Natural killer cell (primary cell): ENCODE measurements at regions of chr17 and their contacts with region 1.

Region 1: DNA sequence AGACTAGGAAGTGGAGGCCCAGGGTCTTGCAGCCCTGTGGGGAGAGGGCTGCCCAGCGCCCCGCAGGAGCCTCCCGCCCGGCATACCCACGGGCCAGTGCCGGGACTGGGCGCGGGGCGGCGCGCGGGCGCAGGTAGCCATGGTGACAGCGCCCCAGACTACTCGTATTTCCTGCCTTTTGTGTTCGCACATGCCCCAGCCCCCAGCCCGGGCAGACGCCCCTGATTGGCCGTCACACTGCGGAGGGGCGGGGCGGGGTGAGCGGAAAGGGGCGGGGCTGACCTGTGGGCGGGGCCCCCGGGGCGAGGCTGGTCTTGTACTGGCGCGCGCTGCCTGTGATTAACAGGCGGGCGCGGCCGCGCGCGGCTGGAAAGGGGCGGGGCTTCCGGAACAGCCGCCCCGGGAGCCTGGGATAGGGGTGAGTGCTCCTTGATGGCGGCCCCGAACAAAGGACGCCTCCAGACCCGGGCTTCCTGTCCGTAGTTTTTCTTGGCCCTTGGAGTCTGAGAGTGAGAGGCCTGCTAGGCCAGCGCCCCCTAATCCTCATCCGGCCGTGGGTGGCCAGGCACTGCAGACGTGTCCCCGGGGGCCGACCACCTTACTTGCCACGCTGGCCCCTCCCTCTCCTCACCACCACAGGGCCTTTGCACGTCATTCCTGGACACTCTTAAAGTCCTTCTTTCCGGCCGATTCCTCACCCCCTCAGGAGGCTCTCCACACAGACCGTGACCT is 71.0 kb downstream of the RAI1 start:
- DNase-seq: peak; percentile 96 to 97
- ATAC-seq: peak; percentile 87 to 97 (median 89)
- H3K4me3 ChIP-seq: peak overlapping the region; percentile 57
- H3K4me3 Mint-ChIP-seq: peak overlapping the region; percentile 91
- H3K27ac ChIP-seq: peak overlapping the region; percentile 93
- H3K27ac Mint-ChIP-seq: peak overlapping the region; percentile 95 to 99
- H3K4me1 ChIP-seq: peaks cover 78% of the 10 kb centered on the region
- H3K4me1 Mint-ChIP-seq: peaks cover 59 to 61% of the 10 kb centered on the region in 2 donors
- H3K27me3 ChIP-seq: no peaks in the 10 kb centered on the region
- H3K27me3 Mint-ChIP-seq: no peaks in the 10 kb centered on the region
- CTCF ChIP-seq: peak; percentile 40

Region 2: DNA sequence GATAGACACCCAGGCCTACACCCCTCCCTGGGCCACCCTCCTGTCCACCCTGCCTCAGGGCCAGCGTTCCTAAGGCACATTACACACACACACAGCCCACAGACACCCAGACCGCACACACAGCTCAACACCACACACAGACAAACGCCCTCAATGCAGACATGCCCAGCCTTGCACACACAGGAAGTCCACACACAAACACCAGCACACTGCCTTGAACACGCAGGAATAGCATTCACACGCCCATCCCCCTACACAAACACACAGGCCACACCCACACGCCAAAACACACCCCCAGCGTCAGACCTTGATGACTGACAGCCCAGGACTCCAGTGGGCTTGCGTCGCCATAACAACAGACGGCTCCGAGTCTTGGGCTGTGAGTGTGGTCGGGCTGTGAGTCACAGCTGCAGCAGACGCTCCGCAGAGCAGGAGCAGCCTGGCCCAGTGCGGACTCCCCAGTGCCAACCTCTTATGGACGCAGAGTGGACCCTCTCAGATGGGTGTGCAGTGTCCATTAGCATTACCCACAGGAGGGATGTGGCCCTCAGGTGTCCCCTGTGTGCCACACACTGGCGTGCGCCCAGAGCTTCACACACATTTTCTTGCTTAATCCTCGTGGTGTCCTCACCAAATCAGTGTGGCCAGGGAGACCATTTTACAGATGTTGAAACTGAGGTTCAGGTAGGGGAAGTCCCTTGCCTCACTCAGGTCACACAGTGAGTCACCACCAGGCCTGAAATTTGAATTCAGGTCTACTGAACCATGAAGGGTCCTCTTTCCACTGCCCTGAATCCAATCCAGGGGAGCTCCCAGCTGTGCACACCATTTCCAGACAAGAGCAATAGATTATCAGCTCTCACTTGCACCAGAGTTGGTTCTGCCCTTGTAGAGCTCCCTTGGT is 88.8 kb before region 1 on chr17:
- intact Hi-C with region 1: loop called (anchors 1 kb)
- DNase-seq: peak; percentile 89 to 91
- ATAC-seq: peak; percentile 86 to 95 (median 89)
- H3K4me3 ChIP-seq: no peak overlapping the region
- H3K4me3 Mint-ChIP-seq: peak overlapping the region; percentile 3
- H3K27ac ChIP-seq: peak overlapping the region; percentile 65
- H3K27ac Mint-ChIP-seq: peak overlapping the region; percentile 82 to 83
- H3K4me1 ChIP-seq: peaks cover 22% of the 10 kb centered on the region
- H3K4me1 Mint-ChIP-seq: peaks cover 16 to 18% of the 10 kb centered on the region in 2 donors
- H3K27me3 ChIP-seq: no peaks in the 10 kb centered on the region
- H3K27me3 Mint-ChIP-seq: no peaks in the 10 kb centered on the region
- CTCF ChIP-seq: no peak

Region 3: DNA sequence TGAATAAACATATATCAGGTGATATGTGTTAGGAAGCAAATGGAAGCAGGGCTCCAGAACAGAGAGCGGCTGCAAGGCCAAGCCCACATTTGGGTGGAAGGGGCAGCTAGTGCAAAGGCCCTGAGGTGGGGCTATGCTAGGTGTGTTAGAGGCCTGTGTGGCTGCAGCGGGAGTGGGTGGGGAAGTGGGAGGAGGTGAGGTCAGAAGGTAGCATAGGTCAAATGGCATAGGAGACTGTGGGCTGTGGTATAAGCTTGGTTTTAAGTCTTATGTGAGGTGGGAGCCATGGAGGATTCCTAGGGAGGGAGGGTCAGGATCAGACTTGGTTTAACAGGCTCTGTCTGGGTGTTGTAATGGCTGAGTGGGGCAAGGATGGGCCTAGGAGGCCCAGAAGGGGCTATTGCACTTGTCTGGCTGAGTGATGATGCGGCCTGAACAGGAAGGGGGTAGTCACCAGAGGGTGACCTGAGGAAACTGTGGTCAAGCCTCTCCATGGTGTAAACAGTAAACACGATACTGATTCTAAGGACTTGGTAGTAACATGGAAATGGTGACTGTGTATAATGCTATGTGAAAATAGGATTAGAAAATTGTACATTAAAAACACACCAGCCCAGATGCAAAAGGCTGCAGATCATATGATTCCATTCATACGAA is 39.9 kb before region 1 on chr17:
- intact Hi-C with region 1: loop called (anchors 5 kb)
- DNase-seq: peak; percentile 14 to 33
- ATAC-seq: peak; percentile 86 to 89 (median 86)
- H3K4me3 ChIP-seq: no peak overlapping the region
- H3K4me3 Mint-ChIP-seq: peak overlapping the region; percentile 55
- H3K27ac ChIP-seq: peak overlapping the region; percentile 76
- H3K27ac Mint-ChIP-seq: peak overlapping the region; percentile 79 to 80
- H3K4me1 ChIP-seq: peaks cover 51% of the 10 kb centered on the region
- H3K4me1 Mint-ChIP-seq: peaks cover 33 to 45% of the 10 kb centered on the region in 2 donors
- H3K27me3 ChIP-seq: no peaks in the 10 kb centered on the region
- H3K27me3 Mint-ChIP-seq: no peaks in the 10 kb centered on the region
- CTCF ChIP-seq: no peak

Region 4: GRCh38 chr17:17729620-17730249 is 22.5 kb before region 1 on chr17:
- intact Hi-C with region 1: no loop called
- DNase-seq: peak in 1 of 2 donors; percentile 80
- ATAC-seq: peak; percentile 54 to 88 (median 85)
- H3K4me3 ChIP-seq: no peak overlapping the region
- H3K4me3 Mint-ChIP-seq: no peak overlapping the region
- H3K27ac ChIP-seq: no peak overlapping the region
- H3K27ac Mint-ChIP-seq: peak overlapping the region in 1 of 2 donors; percentile 47
- H3K4me1 ChIP-seq: peaks cover 19% of the 10 kb centered on the region
- H3K4me1 Mint-ChIP-seq: peaks cover 16 to 21% of the 10 kb centered on the region in 2 donors
- H3K27me3 ChIP-seq: no peaks in the 10 kb centered on the region
- H3K27me3 Mint-ChIP-seq: no peaks in the 10 kb centered on the region
- CTCF ChIP-seq: peak; percentile 56

Region 5: GRCh38 chr17:17792551-17793377 is 40.5 kb after region 1 on chr17:
- intact Hi-C with region 1: loop called (anchors 2 kb)
- DNase-seq: peak; percentile 66 to 88
- ATAC-seq: peak; percentile 83 to 87 (median 84)
- H3K4me3 ChIP-seq: no peak overlapping the region
- H3K4me3 Mint-ChIP-seq: peak overlapping the region; percentile 83
- H3K27ac ChIP-seq: peak overlapping the region; percentile 80
- H3K27ac Mint-ChIP-seq: peak overlapping the region; percentile 82 to 93
- H3K4me1 ChIP-seq: peaks cover 30% of the 10 kb centered on the region
- H3K4me1 Mint-ChIP-seq: peaks cover 25 to 40% of the 10 kb centered on the region in 2 donors
- H3K27me3 ChIP-seq: no peaks in the 10 kb centered on the region
- H3K27me3 Mint-ChIP-seq: no peaks in the 10 kb centered on the region
- CTCF ChIP-seq: no peak

Region 6: GRCh38 chr17:17972126-17972951 is 220.1 kb after region 1 on chr17 and contains the starts of genes DRC3 and TOM1L2:
- intact Hi-C with region 1: loop called (anchors 5 kb)
- DNase-seq: peak; percentile 99
- ATAC-seq: peak; percentile 87 to 96 (median 88)
- H3K4me3 ChIP-seq: peak within 1 kb of the TSS; percentile 72
- H3K4me3 Mint-ChIP-seq: peak within 1 kb of the TSS; percentile 99
- H3K27ac ChIP-seq: peak within 1 kb of the TSS; percentile 81
- H3K27ac Mint-ChIP-seq: peak within 1 kb of the TSS; percentile 95 to 96
- H3K4me1 ChIP-seq: peaks cover 13% of the 10 kb centered on the region
- H3K4me1 Mint-ChIP-seq: peaks cover 26 to 33% of the 10 kb centered on the region in 2 donors
- H3K27me3 ChIP-seq: no peaks in the 10 kb centered on the region
- H3K27me3 Mint-ChIP-seq: no peaks in the 10 kb centered on the region
- CTCF ChIP-seq: no peak
- total RNA-seq, gene DRC3: 0.26 to 0.78 TPM in 2 of 3 donors, not detected in the other
- total RNA-seq, gene TOM1L2: 35.7 to 43.2 (median 35.7) TPM